Activated CD4-positive, alpha-beta memory T cell treated with anti-CD3 and anti-CD28 coated beads, Interleukin-2, amount 10 ng/mL, durations not matched to agents 7 days and 5 days (primary cell): ENCODE measurements at regions of chr9 and their contacts with region 1.

Region 1: GRCh38 chr9:33159760-33160127 is 7.4 kb downstream of the B4GALT1 start:
- DNase-seq: peak; percentile 69
- H3K4me3 Mint-ChIP-seq: peak overlapping the region; percentile 63
- H3K27ac Mint-ChIP-seq: peak overlapping the region; percentile 91
- H3K4me1 Mint-ChIP-seq: peaks cover 93% of the 10 kb centered on the region
- H3K27me3 Mint-ChIP-seq: no peaks in the 10 kb centered on the region

Region 2: GRCh38 chr9:32942755-32943460 is 216.8 kb before region 1 on chr9:
- CTCF ChIA-PET with region 1: no interaction called
- POLR2A ChIA-PET with region 1: no interaction called
- DNase-seq: no peak
- H3K4me3 Mint-ChIP-seq: no peak overlapping the region
- H3K27ac Mint-ChIP-seq: no peak overlapping the region
- H3K4me1 Mint-ChIP-seq: no peaks in the 10 kb centered on the region
- H3K27me3 Mint-ChIP-seq: no peaks in the 10 kb centered on the region

Region 3: GRCh38 chr9:33130508-33130911 is 29.2 kb before region 1 on chr9:
- CTCF ChIA-PET with region 1: interaction called, 4 read pairs
- POLR2A ChIA-PET with region 1: interaction called, 13 read pairs
- DNase-seq: peak; percentile 30
- H3K4me3 Mint-ChIP-seq: no peak overlapping the region
- H3K27ac Mint-ChIP-seq: peak overlapping the region; percentile 88
- H3K4me1 Mint-ChIP-seq: peaks cover 41% of the 10 kb centered on the region
- H3K27me3 Mint-ChIP-seq: no peaks in the 10 kb centered on the region

Region 4: DNA sequence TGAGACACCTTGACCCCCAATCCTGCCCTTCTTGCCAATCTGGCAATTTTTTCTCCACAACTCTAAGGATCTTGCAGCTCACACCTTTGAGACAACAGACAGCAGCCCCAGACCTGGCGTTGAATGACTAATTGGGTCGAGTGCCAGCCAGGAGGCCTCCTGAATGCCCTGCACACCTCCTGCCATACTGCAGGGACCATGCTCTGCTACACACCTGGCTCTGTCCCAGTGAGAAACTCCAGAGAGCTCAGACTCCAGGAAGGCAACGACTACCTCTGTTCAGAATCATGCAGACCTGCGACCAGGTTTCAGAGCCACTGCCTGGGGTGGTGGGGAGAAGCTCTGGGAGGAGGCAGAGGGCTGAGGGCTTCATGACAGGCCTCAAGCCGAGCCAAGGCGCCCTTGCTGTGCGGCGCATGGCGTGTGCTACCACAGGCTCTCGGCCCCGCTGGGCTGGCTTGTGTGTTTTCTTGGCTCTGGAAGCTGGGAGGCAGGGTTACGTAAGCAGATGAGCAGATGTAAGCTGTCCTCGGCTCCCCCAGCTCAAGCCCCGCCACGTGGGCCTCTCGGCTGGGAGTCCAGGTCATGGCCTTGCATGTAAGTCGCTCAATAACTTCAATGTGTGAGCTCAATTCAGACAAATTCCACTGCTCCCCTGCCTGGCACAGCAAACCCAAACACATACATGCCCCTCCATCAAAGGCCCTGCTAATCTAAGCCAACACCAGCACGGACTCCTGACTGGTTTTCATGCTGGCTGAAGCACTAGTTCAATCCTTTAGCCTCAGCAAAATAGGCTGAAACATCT is 20.1 kb before region 1 on chr9:
- CTCF ChIA-PET with region 1: interaction called, 13 read pairs
- POLR2A ChIA-PET with region 1: interaction called, 115 read pairs
- DNase-seq: no peak
- H3K4me3 Mint-ChIP-seq: no peak overlapping the region
- H3K27ac Mint-ChIP-seq: peak overlapping the region; percentile 8
- H3K4me1 Mint-ChIP-seq: peaks cover 87% of the 10 kb centered on the region
- H3K27me3 Mint-ChIP-seq: no peaks in the 10 kb centered on the region

Region 5: GRCh38 chr9:33264473-33265177 is 104.9 kb after region 1 on chr9 and contains the starts of genes BAG1 and CHMP5:
- CTCF ChIA-PET with region 1: no interaction called
- POLR2A ChIA-PET with region 1: interaction called, 10 read pairs
- DNase-seq: peak; percentile 100
- H3K4me3 Mint-ChIP-seq: peak within 1 kb of the TSS; percentile 98
- H3K27ac Mint-ChIP-seq: peak within 1 kb of the TSS; percentile 97
- H3K4me1 Mint-ChIP-seq: peaks cover 66% of the 10 kb centered on the region
- H3K27me3 Mint-ChIP-seq: no peaks in the 10 kb centered on the region
- total RNA-seq, gene BAG1: 56.3 to 57.1 TPM
- total RNA-seq, gene CHMP5: 149 TPM

Region 6: DNA sequence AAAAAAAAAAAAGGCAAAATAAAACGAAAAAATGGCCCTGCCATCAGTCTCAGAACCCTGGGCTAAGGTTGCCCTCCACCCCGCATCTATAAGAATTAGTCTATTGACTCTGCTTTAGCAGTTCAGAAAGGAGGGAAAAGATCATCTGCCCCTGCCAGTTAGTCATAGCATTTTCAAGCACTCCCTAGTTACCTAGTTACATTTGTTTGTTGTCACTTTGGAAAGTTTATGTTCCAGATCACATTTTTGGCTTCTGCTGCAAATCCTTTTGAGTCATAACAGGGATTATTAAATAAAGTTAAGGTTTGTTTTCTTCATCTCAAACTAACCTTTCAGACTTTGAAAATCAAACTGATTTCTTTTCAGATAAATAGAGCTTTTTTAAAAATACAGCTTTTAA is 190.6 kb after region 1 on chr9:
- CTCF ChIA-PET with region 1: no interaction called
- POLR2A ChIA-PET with region 1: no interaction called
- DNase-seq: no peak
- H3K4me3 Mint-ChIP-seq: no peak overlapping the region
- H3K27ac Mint-ChIP-seq: no peak overlapping the region
- H3K4me1 Mint-ChIP-seq: peaks cover 11% of the 10 kb centered on the region
- H3K27me3 Mint-ChIP-seq: no peaks in the 10 kb centered on the region